WTC11 (cell line): ENCODE measurements at regions of chr11 and their contacts with region 1.

Region 1: DNA sequence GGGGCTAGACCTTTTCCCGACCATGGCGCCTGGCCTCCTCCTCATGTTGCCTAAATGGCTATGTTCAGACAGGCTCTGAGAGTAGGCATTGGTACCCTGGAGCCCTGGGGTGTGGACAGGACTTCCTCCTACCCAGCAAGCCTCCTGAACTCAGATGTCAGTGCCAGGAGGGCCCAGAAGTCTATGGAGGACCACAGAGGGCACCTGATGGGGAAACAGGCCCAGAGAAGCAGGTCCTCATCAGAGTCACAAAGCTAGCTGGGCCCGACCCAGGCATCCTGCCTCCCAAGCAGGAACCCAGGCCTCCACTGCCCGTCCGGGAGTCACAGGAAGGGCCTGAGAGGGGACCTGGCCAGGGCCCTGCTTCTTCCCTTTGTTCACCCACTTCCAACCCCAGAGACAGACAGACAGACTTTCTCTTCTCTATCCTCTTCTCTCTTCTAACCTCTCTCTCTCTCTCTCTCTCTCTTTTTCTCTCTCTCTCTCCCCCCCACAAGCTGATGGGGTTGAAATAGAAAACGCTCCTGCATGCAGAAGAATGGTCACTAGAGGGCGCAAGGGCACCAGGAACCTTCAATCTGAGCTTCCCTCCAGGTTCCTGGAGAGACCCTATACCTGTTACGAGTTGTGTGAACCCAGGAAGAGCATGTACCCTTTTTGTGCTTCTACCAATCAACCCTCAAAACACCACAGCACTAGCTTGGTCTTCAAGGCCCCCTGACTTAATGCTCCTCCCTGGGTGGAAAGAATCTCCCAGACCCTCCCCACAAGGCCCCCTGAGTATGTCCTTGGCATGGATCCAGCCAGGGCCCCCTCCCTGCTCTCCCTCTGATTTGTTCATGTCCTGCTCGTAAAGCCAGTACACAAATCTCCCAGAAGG is 27.1 kb downstream of the ARAP1 start:
- DNase-seq: peak; percentile 79
- ATAC-seq: peak; percentile 63
- H3K4me3 Mint-ChIP-seq: no peak overlapping the region
- H3K27ac Mint-ChIP-seq: peak overlapping the region; percentile 55; the same call in 1 of the 2 replicates
- H3K4me1 Mint-ChIP-seq: peaks cover 12% of the 10 kb centered on the region
- H3K27me3 Mint-ChIP-seq: no peaks in the 10 kb centered on the region
- CTCF ChIP-seq: peak; percentile 84

Region 2: GRCh38 chr11:72652873-72653630 is 72.0 kb before region 1 on chr11:
- CTCF ChIA-PET with region 1: no interaction called
- POLR2A ChIA-PET with region 1: no interaction called
- DNase-seq: peak; percentile 78
- ATAC-seq: peak; percentile 94
- H3K4me3 Mint-ChIP-seq: no peak overlapping the region
- H3K27ac Mint-ChIP-seq: 0 out of 2 replicates have a peak overlapping the region, but pooled peaks have one; percentile 1
- H3K4me1 Mint-ChIP-seq: peaks cover 13% of the 10 kb centered on the region
- H3K27me3 Mint-ChIP-seq: peaks cover 8% of the 10 kb centered on the region
- CTCF ChIP-seq: no peak

Region 3: GRCh38 chr11:72736452-72737069 is 11.5 kb after region 1 on chr11:
- CTCF ChIA-PET with region 1: interaction called, 19 read pairs
- POLR2A ChIA-PET with region 1: interaction called, 3 read pairs
- DNase-seq: no peak
- ATAC-seq: no peak; the same call in 1 of the 2 replicates
- H3K4me3 Mint-ChIP-seq: no peak overlapping the region
- H3K27ac Mint-ChIP-seq: peak overlapping the region; percentile 55
- H3K4me1 Mint-ChIP-seq: peaks cover 43% of the 10 kb centered on the region
- H3K27me3 Mint-ChIP-seq: no peaks in the 10 kb centered on the region
- CTCF ChIP-seq: no peak

Region 4: DNA sequence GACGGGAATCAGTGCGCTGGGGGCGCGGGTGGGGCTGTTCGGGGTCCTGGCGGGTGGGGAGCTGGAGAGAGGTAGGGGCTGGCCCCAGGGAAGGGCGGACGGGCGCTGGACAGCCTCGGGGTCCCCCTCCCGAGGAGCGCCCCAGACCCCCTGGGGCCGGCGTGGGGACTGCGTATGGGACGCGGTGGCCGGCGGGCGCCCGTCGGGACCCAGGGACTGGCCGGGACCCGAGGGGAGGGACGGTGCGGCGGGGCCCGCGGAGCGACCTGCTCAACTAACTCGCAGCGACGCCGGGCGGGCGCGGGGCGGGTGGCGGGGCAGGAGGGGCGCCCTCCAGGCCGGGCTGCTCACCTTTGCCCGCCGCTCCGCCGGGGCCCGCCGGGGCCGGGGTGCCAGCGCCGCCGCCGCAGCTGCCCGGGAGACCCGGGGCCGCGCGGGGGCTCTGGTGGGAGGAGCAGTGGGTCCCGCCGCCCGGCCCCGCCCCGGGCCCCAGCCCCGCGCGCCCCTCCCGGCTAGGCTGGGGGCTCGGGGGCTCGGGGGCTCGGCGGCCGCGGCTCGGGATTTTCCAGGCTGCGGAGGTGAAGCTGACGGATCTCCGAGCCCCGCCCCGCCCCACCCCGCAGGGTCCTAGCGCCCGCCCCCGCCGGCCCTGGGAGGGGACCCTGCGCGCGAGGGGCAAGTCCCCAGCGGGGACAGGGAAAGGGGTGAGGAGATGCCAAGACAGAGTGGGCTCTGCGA is 56.4 kb after region 1 on chr11:
- CTCF ChIA-PET with region 1: interaction called, 24 read pairs
- POLR2A ChIA-PET with region 1: interaction called, 5 read pairs
- DNase-seq: peak; percentile 49
- ATAC-seq: peak; percentile 35
- H3K4me3 Mint-ChIP-seq: peak overlapping the region; percentile 87
- H3K27ac Mint-ChIP-seq: no peak overlapping the region
- H3K4me1 Mint-ChIP-seq: peaks cover 25% of the 10 kb centered on the region
- H3K27me3 Mint-ChIP-seq: peaks cover 7% of the 10 kb centered on the region
- CTCF ChIP-seq: no peak

Region 5: GRCh38 chr11:72793425-72794367 is 68.6 kb after region 1 on chr11 and contains the start of gene STARD10:
- CTCF ChIA-PET with region 1: interaction called, 81 read pairs
- POLR2A ChIA-PET with region 1: no interaction called
- DNase-seq: peak; percentile 95
- ATAC-seq: peak; percentile 86
- H3K4me3 Mint-ChIP-seq: peak within 1 kb of the TSS; percentile 98
- H3K27ac Mint-ChIP-seq: peak within 1 kb of the TSS; percentile 98
- H3K4me1 Mint-ChIP-seq: peaks cover 25% of the 10 kb centered on the region
- H3K27me3 Mint-ChIP-seq: no peaks in the 10 kb centered on the region
- CTCF ChIP-seq: peak; percentile 92
- total RNA-seq, gene STARD10: 32.0 to 40.9 TPM (median 36.6 TPM) in 3 replicates

Region 6: DNA sequence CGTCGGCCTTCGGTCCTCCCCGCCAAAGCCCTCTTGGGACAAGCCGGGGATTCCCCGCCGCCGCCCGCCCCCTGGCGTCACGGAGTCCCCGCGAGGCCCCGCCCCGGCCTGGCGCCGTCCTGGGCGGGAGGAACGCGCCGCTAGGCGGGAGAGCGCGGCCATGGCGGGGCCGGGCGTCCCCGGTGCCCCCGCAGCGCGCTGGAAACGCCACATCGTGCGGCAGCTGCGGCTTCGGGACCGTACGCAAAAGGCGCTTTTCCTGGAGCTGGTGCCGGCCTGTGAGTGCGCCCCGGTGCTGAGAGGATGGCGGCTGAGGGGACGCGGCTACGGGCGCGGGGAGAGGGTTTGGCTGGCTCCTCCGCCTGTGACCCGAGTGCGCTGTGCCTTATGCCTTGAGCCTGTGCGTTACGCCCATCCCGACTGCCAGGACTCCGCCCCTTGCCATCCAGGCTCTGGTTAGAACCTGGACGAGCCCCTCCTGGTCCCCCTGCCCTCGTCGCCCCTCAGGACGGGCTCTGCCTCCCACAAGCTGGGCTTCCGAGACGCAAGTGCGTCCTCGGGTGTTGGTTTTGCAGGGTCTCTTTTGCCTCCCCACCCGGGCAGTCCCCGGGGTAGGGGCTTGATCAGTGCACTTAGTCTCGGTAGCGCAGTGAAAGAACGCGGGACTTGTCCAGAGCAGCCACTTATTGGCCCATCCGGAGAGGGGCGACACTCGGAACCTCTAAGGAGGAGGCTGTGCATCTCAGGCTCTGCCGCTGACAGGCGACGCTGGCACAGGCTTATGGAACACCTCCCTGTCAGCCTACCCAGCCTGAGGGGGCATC is 89.4 kb after region 1 on chr11 and contains the start of gene ATG16L2:
- CTCF ChIA-PET with region 1: interaction called, 22 read pairs
- POLR2A ChIA-PET with region 1: interaction called, 3 read pairs
- DNase-seq: peak; percentile 84
- ATAC-seq: peak; percentile 80
- H3K4me3 Mint-ChIP-seq: peak within 1 kb of the TSS; percentile 95
- H3K27ac Mint-ChIP-seq: peak within 1 kb of the TSS; percentile 97
- H3K4me1 Mint-ChIP-seq: peaks cover 32% of the 10 kb centered on the region
- H3K27me3 Mint-ChIP-seq: peaks cover 22% of the 10 kb centered on the region
- CTCF ChIP-seq: no peak
- total RNA-seq, gene ATG16L2: 22.2 to 29.0 TPM (median 28.6 TPM) in 3 replicates

Region 7: DNA sequence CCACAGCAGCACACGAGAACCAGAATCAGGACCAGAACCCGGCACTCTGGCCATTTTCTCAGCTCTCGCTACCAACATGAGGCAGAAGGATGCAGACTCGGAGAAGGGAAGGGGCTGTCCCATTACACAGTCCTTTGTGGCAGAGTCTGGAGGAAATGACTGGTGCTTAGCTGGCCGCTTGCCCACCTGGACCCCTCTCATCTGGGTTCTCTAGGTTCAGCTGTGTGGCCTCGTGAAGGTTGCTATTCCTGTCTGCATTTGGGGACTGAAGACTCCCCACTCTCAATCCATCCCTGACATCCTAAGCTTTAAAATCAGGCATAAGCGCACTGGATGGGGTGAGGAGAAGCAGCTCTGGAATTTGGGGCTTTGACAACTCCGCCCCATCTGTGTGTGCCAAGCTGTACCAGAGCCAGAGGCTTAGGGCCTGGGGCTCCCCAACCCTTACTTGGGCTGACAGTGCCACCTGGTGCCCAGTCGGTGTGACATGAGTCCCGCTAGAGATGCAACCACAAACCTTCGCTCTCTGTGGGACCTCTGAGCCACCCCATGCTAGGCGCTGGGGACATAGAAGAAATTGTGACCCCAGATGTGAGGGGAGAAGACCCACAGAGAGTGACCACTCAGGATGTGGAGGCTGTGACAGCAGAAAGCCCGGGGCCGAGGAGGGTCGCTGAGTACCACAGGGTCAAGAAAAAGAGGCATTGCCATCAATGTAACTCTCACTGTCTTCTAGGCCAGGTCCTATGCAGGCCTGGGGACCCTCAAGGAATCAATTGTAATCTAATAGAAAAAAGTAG is 452.9 kb after region 1 on chr11:
- CTCF ChIA-PET with region 1: interaction called, 11 read pairs
- POLR2A ChIA-PET with region 1: no interaction called
- DNase-seq: peak; percentile 83
- ATAC-seq: peak; percentile 97
- H3K4me3 Mint-ChIP-seq: no peak overlapping the region
- H3K27ac Mint-ChIP-seq: no peak overlapping the region
- H3K4me1 Mint-ChIP-seq: no peaks in the 10 kb centered on the region
- H3K27me3 Mint-ChIP-seq: no peaks in the 10 kb centered on the region; the same call in 1 of the 2 replicates
- CTCF ChIP-seq: peak; percentile 66